Mammary epithelial cell (primary cell): ENCODE measurements at regions of chr10 and their contacts with region 1.

Region 1: GRCh38 chr10:122980209-122981065 is at the start of gene PSTK:
- DNase-seq: peak; percentile 86
- H3K4me3 ChIP-seq: peak within 1 kb of the TSS; percentile 73 to 100 (median 76)
- H3K27ac ChIP-seq: peak within 1 kb of the TSS; percentile 78
- H3K4me1 ChIP-seq: peaks cover 10% of the 10 kb centered on the region
- H3K27me3 ChIP-seq: no peaks in the 10 kb centered on the region
- CTCF ChIP-seq: peak; percentile 87 to 93
- total RNA-seq, gene PSTK: 4.0 to 5.7 TPM

Region 2: DNA sequence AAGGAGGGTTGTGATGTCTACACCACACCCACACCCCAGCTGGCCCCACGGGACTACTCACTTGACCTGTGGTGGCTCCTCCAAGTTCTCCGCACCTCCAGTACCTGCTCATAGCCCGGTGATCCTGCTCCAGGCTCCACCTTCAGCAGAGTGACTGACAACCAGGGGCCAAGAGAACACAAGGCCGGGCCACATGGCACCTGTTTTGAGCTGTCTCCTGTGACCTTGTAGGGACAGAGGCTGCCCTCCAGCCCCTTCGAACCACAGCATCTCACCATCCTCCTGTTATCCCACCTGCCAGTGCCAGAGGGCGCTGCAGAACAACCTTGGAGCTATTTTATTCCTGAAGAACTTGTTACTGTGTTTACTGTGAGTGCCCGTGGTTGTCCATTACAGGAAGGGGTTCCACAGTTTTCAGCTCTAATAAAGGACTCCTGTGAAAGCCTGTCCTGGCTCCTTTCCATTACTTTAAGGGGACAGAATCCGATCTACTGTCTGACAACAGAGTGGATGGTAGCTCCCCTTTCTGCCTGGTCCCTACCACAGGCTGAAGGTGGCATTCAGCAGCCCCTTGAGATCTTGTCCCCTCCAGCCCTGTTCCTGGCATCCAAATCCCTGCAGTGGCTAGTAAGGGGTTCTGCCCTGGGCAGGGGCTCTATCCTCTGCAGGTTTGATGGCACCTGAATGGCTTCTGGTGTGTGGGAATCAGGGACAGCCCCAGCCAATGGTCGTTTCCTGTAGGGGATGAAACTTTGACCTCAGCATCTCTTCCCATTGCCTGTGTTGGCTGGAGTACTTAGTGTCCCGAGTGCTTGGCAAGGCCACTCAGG is 331.6 kb before region 1 on chr10:
- CTCF ChIA-PET with region 1: no interaction called
- dilution Hi-C with region 1: no loop called
- in situ Hi-C with region 1: no loop called
- intact Hi-C with region 1: loop called (anchors 1 kb)
- DNase-seq: peak; percentile 16
- H3K4me3 ChIP-seq: no peak overlapping the region
- H3K27ac ChIP-seq: no peak overlapping the region
- H3K4me1 ChIP-seq: no peaks in the 10 kb centered on the region
- H3K27me3 ChIP-seq: no peaks in the 10 kb centered on the region
- CTCF ChIP-seq: peak; percentile 87

Region 3: GRCh38 chr10:123008439-123009205 is 28.2 kb after region 1 on chr10 and contains the starts of genes ACADSB and IKZF5:
- CTCF ChIA-PET with region 1: no interaction called
- dilution Hi-C with region 1: no loop called
- in situ Hi-C with region 1: no loop called
- intact Hi-C with region 1: loop called (anchors 1 kb)
- DNase-seq: peak; percentile 96
- H3K4me3 ChIP-seq: peak within 1 kb of the TSS; percentile 85 to 94 (median 88)
- H3K27ac ChIP-seq: peak within 1 kb of the TSS; percentile 75
- H3K4me1 ChIP-seq: peaks cover 17% of the 10 kb centered on the region
- H3K27me3 ChIP-seq: no peaks in the 10 kb centered on the region
- CTCF ChIP-seq: no peak
- total RNA-seq, gene ACADSB: 4.2 to 12.8 TPM
- total RNA-seq, gene IKZF5: 6.5 to 9.2 TPM